Psoas muscle (tissue), 8 donors: ENCODE measurements at regions of chr22 and their contacts with region 1.

Region 1: GRCh38 chr22:30386960-30387827 is at the start of gene RNF215:
- DNase-seq: peak; percentile 85 to 92
- ATAC-seq: peak; percentile 93 to 97 (median 95)
- H3K4me3 ChIP-seq: peak within 1 kb of the TSS; percentile 70
- H3K27ac ChIP-seq: peak within 1 kb of the TSS; percentile 60
- H3K4me1 ChIP-seq: peaks cover 8% of the 10 kb centered on the region
- H3K27me3 ChIP-seq: no peaks in the 10 kb centered on the region
- CTCF ChIP-seq: peak; percentile 99
- total RNA-seq, gene RNF215: 5.7 to 9.8 (median 8.2) TPM

Region 2: DNA sequence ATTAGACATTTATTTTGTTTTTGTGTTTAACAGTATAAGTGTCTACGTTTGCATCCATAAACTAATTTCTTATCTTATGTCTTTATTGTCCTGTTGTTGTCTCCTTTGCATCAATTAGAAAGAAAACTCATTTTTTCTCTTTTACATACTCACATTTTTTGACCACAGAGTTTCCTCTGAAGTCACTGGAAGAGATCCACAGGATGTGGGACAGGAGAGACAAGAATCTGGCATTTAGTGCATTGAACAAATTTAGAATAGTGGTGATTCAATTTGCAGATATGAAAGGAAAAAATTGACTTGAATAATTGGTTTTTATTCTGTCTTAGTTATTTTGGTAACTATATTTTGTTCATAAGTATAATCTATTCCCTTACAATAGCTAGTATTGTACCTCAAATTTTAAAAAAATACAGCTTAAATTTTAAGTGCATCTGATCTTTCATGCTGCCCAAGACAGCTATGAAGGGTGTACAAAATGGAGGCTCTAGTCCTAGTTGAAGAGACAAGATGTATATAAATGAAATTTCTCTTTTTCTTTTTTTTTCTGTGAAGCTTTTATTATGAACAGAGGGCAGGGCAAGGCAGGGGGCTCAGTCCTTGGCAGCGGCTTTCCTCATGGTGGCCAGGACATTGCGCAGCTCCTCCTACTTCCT is 282.6 kb before region 1 on chr22:
- intact Hi-C with region 1: loop called in 1 of 2 experiments (anchors 5 kb)
- DNase-seq: no peak
- ATAC-seq: no peak
- H3K4me3 ChIP-seq: no peak overlapping the region
- H3K27ac ChIP-seq: no peak overlapping the region
- H3K4me1 ChIP-seq: no peaks in the 10 kb centered on the region
- H3K27me3 ChIP-seq: peaks cover 0 to 9% (median 2%) of the 10 kb centered on the region in 3 donors
- CTCF ChIP-seq: no peak

Region 3: DNA sequence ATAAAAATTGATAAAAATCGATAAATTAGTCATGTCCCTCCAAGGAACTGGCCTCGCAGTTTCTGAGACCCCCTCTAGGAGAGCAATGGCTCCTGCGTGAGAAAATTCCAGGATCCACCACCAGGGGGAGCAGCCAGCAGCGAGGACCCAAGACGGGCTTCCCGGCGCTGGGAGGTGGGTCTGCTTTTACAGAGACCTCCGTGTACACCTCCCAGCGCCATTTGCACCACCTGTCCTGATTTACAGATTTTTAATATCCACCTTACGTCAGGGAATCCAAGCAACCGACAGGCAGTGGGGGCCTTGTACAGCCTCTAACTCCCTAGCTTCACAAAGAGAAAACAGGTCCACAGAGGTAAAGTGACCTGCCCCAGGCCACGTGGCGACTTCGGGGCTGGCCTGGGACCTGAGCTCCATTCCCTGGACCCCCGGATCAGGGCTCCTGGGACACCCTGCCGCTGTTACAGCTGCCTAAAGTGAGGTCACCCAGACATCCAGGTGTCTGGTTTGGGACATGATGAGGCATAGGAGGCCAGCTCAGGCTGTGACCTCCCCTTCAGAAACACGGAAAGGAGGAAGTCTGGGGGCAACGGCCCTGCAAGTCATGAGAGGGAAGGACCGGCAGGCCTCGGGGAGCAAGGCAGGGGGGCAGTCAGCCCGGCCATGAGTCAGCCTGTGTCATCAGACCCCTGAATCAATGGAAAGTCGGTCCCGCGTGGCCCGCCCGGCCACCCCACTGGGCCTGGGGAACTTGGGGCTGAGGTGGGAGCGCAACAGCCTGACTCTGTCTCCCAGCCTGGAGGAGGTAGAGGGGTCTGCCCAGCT is 124.1 kb before region 1 on chr22:
- intact Hi-C with region 1: loop called (anchors 1 to 2 kb)
- DNase-seq: peak; percentile 73 to 85
- ATAC-seq: peak; percentile 60 to 87 (median 70)
- H3K4me3 ChIP-seq: peak overlapping the region; percentile 37
- H3K27ac ChIP-seq: no peak overlapping the region
- H3K4me1 ChIP-seq: no peaks in the 10 kb centered on the region
- H3K27me3 ChIP-seq: no peaks in the 10 kb centered on the region
- CTCF ChIP-seq: peak; percentile 98

Region 4: GRCh38 chr22:30423982-30424963 is 37.1 kb after region 1 on chr22:
- intact Hi-C with region 1: loop called (anchors 2 to 5 kb)
- DNase-seq: peak; percentile 99
- ATAC-seq: peak; percentile 84 to 93 (median 88)
- H3K4me3 ChIP-seq: peak overlapping the region; percentile 83
- H3K27ac ChIP-seq: peak overlapping the region; percentile 97
- H3K4me1 ChIP-seq: peaks cover 24% of the 10 kb centered on the region
- H3K27me3 ChIP-seq: no peaks in the 10 kb centered on the region
- CTCF ChIP-seq: no peak

Region 5: GRCh38 chr22:30435674-30436126 is 48.5 kb after region 1 on chr22:
- intact Hi-C with region 1: no loop called
- DNase-seq: peak in 1 of 2 donors; percentile 64
- ATAC-seq: no peak
- H3K4me3 ChIP-seq: no peak overlapping the region
- H3K27ac ChIP-seq: peak overlapping the region; percentile 37
- H3K4me1 ChIP-seq: no peaks in the 10 kb centered on the region
- H3K27me3 ChIP-seq: peaks cover 0 to 5% (median 0%) of the 10 kb centered on the region in 3 donors
- CTCF ChIP-seq: no peak

Region 6: DNA sequence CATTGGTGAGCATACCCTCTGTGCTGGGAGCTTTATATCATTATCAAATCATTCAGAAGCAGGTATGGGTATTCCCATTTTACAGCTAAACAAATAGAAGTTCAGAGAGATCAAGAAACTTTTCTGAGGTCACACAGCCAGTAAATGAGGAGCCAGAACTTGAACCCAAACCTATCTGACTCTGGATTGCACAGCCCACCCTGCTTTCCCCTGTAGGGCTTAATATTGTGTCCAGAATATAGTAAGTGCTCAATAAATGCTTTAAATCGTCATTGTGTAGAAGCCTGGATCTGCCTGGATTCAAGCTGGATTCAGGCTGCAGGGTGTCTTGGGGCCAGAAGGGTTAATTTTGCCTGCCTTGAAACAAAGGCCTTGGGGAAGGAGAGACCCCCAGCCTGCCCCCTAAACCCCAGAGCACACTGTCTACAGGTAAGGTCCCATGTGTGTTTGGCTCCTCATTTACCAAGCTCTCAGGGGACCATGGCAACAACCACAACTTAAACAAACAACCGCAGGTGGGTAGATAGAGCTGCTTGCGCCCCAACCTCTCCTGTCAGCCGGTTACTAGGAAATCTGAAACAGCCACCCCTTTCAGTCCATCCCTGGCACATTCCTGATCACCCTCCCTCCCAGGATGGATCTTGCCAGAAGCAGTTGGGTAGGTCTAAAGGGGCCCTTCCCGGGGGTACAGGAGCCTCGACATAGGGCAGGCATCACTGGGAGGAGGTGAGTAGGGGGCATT is 87.7 kb after region 1 on chr22:
- intact Hi-C with region 1: no loop called
- DNase-seq: no peak
- ATAC-seq: no peak
- H3K4me3 ChIP-seq: no peak overlapping the region
- H3K27ac ChIP-seq: no peak overlapping the region
- H3K4me1 ChIP-seq: no peaks in the 10 kb centered on the region
- H3K27me3 ChIP-seq: peaks cover 0 to 27% (median 3%) of the 10 kb centered on the region in 3 donors
- CTCF ChIP-seq: no peak

Region 7: GRCh38 chr22:30485362-30485988 is 98.3 kb after region 1 on chr22:
- intact Hi-C with region 1: loop called (anchors 1 to 2 kb)
- DNase-seq: peak; percentile 44 to 65
- ATAC-seq: peak; percentile 86 to 93 (median 91)
- H3K4me3 ChIP-seq: no peak overlapping the region
- H3K27ac ChIP-seq: no peak overlapping the region
- H3K4me1 ChIP-seq: no peaks in the 10 kb centered on the region
- H3K27me3 ChIP-seq: peaks cover 0 to 6% (median 0%) of the 10 kb centered on the region in 3 donors
- CTCF ChIP-seq: peak; percentile 96

Region 8: DNA sequence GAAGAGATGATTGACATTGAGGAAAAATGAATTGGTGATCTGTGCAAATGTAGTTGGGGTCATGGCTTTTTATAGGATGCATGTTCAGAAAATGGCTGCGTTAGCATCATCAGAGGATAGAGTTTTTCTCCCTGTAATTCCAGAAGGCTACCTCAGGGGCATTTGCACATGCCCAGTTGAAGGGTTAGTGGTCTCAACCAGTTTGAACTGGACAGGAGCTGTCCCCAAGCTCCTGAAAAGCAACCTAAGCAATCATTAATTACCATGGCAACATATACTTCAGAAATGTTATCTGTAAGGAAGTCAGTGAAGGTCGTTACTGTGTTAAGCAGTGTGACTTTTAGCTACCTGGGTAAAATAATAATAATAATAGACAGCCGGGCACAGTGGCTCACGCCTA is 611.1 kb after region 1 on chr22:
- intact Hi-C with region 1: no loop called
- DNase-seq: no peak
- ATAC-seq: no peak
- H3K4me3 ChIP-seq: no peak overlapping the region
- H3K27ac ChIP-seq: no peak overlapping the region
- H3K4me1 ChIP-seq: no peaks in the 10 kb centered on the region
- H3K27me3 ChIP-seq: no peaks in the 10 kb centered on the region
- CTCF ChIP-seq: no peak